ENCODE measurements at regions of chr6 and their contacts with region 1.

Region 1: DNA sequence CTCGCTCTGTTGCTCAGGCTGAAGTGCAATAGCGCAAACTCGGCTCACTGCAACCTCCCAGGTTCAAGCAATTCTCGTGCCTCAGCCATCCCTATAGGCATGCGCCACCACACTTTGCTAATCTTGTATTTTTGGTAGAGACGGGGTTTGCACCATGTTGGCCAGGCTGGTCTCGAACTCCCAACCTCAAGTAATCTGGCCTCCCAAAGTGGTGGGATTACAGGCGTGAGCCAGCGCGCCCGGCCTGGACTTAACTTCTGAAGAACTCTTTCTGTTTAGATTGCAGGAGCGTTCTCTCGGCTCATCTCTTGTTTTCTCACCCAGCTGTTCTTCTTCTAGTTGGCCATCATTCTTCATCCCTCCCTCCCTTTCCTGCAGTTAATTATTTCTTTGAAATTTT is 30.3 kb downstream of the GTF2H5 start:
- DNase-seq: no peak
- H3K4me3 ChIP-seq: no peak overlapping the region
- H3K27ac ChIP-seq: peak overlapping the region in 1 of 2 experiments; percentile 25
- H3K4me1 ChIP-seq: peaks cover 0 to 45% (median 24%) of the 10 kb centered on the region in 4 experiments
- H3K27me3 ChIP-seq: no peaks in the 10 kb centered on the region

Region 2: GRCh38 chr6:158213925-158214674 is 15.6 kb after region 1 on chr6:
- CTCF ChIA-PET with region 1: interaction called, 32 read pairs
- POLR2A ChIA-PET with region 1: interaction called, 5 read pairs
- DNase-seq: peak; percentile 74 to 85 (median 78)
- H3K4me3 ChIP-seq: no peak overlapping the region
- H3K27ac ChIP-seq: no peak overlapping the region
- H3K4me1 ChIP-seq: no peaks in the 10 kb centered on the region
- H3K27me3 ChIP-seq: no peaks in the 10 kb centered on the region

Region 3: GRCh38 chr6:158468666-158469065 is 270.2 kb after region 1 on chr6:
- CTCF ChIA-PET with region 1: no interaction called
- POLR2A ChIA-PET with region 1: no interaction called
- DNase-seq: no peak
- H3K4me3 ChIP-seq: no peak overlapping the region
- H3K27ac ChIP-seq: no peak overlapping the region
- H3K4me1 ChIP-seq: peaks cover 0 to 5% (median 3%) of the 10 kb centered on the region in 4 experiments
- H3K27me3 ChIP-seq: no peaks in the 10 kb centered on the region